GM18951 (cell line): ENCODE measurements at regions of chr7 and their contacts with region 1.

Region 1: GRCh38 chr7:106542550-106543220 is 118.3 kb downstream of the CCDC71L start:
- POLR2A ChIP-seq: no peak

Region 2: GRCh38 chr7:106736508-106737201 is 194.0 kb after region 1 on chr7:
- in situ Hi-C with region 1: loop called (anchors 10 kb)
- POLR2A ChIP-seq: no peak